Activated naive CD4-positive, alpha-beta T cell treated with anti-CD3 and anti-CD28 coated beads for 36 hours (primary cell): ENCODE measurements at regions of chr11 and their contacts with region 1.

Region 1: DNA sequence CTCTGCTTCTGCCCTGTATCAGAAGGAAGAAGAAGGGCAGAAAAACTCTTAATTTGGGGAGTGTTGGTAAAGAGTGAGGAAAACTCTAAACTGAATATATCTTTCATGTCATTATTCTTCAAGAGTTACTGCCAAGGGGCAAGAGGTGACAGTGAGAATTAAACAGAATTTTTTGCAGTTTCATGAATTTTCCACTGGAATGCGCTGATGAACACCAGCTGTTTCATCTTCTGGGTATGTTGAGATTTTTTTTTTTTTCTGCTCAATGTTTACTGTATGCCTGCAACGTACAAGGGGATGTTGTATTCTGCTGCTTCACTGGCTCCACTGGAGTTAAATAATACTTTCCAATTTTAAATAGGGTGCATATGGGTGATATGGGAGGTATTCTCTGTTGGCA is 117.8 kb downstream of the FAM76B start:
- DNase-seq: no peak
- H3K4me3 Mint-ChIP-seq: no peak overlapping the region
- H3K27ac Mint-ChIP-seq: no peak overlapping the region
- H3K4me1 Mint-ChIP-seq: peaks cover 47% of the 10 kb centered on the region
- H3K27me3 Mint-ChIP-seq: no peaks in the 10 kb centered on the region

Region 2: GRCh38 chr11:94134651-94135512 is 1536.9 kb before region 1 on chr11:
- CTCF ChIA-PET with region 1: no interaction called
- intact Hi-C with region 1: loop called (anchors 10 kb)
- DNase-seq: peak; percentile 78
- H3K4me3 Mint-ChIP-seq: no peak overlapping the region
- H3K27ac Mint-ChIP-seq: peak overlapping the region; percentile 22
- H3K4me1 Mint-ChIP-seq: peaks cover 40% of the 10 kb centered on the region
- H3K27me3 Mint-ChIP-seq: no peaks in the 10 kb centered on the region

Region 3: DNA sequence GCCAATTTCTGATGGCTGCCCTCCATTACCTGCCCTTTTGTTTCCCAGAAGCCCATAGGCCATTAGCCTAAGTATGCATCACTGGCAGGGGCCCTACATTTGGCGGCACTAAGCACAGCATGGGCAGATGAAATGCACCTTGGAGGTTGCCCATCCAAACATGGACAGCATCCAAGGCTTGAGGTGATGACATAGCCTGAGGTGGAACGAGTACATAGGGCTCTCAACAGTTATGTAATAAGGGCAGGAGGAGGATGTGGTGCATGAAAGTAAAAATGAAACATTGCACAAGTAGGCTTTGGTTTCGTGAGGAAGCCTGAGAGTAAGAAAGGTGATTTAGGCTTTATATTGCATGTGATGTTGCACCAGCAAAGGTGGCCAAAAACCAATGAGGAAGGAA is 30.3 kb before region 1 on chr11:
- CTCF ChIA-PET with region 1: no interaction called
- intact Hi-C with region 1: loop called (anchors 2 kb)
- DNase-seq: peak; percentile 52
- H3K4me3 Mint-ChIP-seq: no peak overlapping the region
- H3K27ac Mint-ChIP-seq: peak overlapping the region; percentile 55
- H3K4me1 Mint-ChIP-seq: peaks cover 22% of the 10 kb centered on the region
- H3K27me3 Mint-ChIP-seq: no peaks in the 10 kb centered on the region

Region 4: GRCh38 chr11:95661162-95661561 is 10.6 kb before region 1 on chr11:
- CTCF ChIA-PET with region 1: interaction called, 3 read pairs
- intact Hi-C with region 1: loop called (anchors 1 kb)
- DNase-seq: no peak
- H3K4me3 Mint-ChIP-seq: no peak overlapping the region
- H3K27ac Mint-ChIP-seq: no peak overlapping the region
- H3K4me1 Mint-ChIP-seq: peaks cover 26% of the 10 kb centered on the region
- H3K27me3 Mint-ChIP-seq: no peaks in the 10 kb centered on the region

Region 5: DNA sequence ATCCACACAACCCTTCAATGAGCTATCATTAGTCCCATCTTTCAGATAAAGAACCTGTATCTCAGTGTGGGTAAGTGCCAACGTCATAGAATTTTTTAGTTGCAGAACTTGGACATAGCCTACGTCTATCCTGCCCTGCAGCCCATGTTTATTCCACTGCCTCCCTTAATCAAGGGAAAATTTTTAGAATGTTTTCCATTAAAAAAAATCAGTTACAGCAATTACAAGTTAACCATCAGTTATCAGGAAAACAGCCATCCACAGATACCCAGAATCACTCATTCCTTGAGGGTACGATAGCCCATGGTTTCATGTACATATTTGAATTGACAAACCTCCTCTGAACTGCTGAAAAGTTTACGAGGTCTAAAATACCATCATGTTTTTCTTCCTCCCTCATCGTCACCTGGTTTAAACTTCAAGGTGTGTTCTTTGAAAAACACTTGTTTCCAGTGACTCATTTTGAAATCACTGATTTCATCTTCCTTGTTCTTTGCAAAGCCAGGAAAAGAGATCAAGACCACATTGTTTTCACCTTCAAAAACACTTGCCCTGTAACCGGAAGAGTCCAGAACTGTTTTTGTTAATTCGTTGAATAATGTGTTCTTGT is 16.9 kb after region 1 on chr11:
- CTCF ChIA-PET with region 1: interaction called, 3 read pairs
- intact Hi-C with region 1: loop called (anchors 1 kb)
- DNase-seq: no peak
- H3K4me3 Mint-ChIP-seq: no peak overlapping the region
- H3K27ac Mint-ChIP-seq: no peak overlapping the region
- H3K4me1 Mint-ChIP-seq: peaks cover 38% of the 10 kb centered on the region
- H3K27me3 Mint-ChIP-seq: no peaks in the 10 kb centered on the region